Heart right ventricle (tissue), 16 donors: ENCODE measurements at regions of chr6 and their contacts with region 1.

Region 1: DNA sequence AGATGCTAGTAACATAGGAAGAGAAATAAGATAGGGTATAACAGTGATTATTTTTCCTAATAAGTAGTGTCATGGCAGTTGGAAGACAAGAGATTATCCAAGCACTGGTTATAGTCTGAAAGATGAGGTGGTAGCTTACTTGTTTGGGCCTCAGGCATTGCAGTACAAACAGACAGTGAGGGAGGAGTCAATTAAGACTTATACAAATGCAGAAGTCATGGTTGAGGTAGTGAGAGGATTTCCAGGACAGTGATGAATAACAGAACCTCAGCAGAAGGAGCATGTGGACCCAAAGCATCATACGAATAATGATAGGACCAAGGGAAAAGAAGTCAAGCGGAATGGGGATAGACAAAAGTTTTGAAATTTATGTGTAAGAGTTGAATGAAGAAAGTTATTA is 53.5 kb downstream of the HCRTR2 start:
- DNase-seq: no peak
- ATAC-seq: no peak
- H3K4me3 ChIP-seq: no peak overlapping the region
- H3K27ac ChIP-seq: no peak overlapping the region
- H3K4me1 ChIP-seq: no peaks in the 10 kb centered on the region
- H3K27me3 ChIP-seq: no peaks in the 10 kb centered on the region
- CTCF ChIP-seq: no peak

Region 2: GRCh38 chr6:53979468-53980067 is 1248.3 kb before region 1 on chr6:
- intact Hi-C with region 1: loop called in 1 of 10 experiments (anchors 10 kb)
- DNase-seq: no peak
- ATAC-seq: no peak
- H3K4me3 ChIP-seq: no peak overlapping the region
- H3K27ac ChIP-seq: no peak overlapping the region
- H3K4me1 ChIP-seq: peaks cover 0 to 12% (median under 1%) of the 10 kb centered on the region in 9 donors
- H3K27me3 ChIP-seq: no peaks in the 10 kb centered on the region
- CTCF ChIP-seq: peak; percentile 60 to 91 (median 86)

Region 3: GRCh38 chr6:55931101-55931500 is 703.2 kb after region 1 on chr6:
- intact Hi-C with region 1: no loop called
- DNase-seq: no peak
- ATAC-seq: no peak
- H3K4me3 ChIP-seq: no peak overlapping the region
- H3K27ac ChIP-seq: no peak overlapping the region
- H3K4me1 ChIP-seq: no peaks in the 10 kb centered on the region
- H3K27me3 ChIP-seq: no peaks in the 10 kb centered on the region
- CTCF ChIP-seq: no peak